A673 (cell line): ENCODE measurements at regions of chr5 and their contacts with region 1.

Region 1: DNA sequence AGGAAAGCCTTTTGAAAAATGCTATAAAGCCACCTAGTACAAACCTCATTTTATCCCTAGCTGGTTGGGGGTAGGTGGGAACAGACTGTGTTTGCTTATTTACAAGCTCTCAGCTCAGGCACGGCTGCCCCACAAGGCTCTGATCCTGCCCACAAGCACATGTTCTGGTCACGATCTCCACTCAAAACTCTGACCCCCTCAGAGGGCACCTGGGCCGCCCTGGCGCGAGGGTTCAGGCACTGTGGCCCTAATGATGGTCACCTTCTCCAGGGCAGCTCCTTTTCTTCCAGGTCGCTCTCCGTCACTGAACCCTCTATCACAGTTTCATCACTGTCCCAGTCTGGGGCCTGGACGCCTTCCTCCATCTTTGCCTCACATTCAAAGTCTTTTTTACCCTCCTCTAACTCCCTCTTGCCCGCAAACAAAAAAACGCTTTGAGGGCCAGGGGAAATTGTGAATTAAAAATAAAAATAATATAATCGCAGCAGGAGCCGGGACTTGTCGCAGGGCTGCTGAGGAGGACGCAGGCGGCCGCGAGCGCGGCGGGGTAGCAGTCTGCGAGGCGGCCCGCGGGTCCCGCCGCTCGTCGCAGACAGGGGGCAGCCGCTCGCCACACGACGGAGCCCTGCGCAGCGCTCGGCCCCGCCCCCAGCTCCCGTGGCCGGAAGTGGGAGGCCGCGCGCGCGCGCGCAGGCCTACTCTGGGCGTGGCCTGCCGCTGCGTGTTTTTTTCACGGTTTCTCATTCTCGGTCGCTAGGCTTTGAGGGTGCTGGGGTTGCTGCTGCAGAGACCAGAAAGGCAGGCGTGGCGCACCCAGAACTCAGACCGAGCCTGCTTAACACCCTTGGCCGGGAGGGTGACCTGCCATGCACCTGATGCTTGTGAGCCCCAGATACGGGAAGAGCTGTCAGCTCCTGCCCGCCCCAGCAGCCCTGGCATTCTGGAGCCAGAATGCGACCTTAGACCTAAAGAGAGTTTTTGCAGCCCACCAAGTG is at the start of gene ANKRD31:
- DNase-seq: peak; percentile 87
- H3K4me3 ChIP-seq: peak within 1 kb of the TSS; percentile 58
- H3K27ac ChIP-seq: no peak within 1 kb of the TSS
- H3K4me1 ChIP-seq: no peaks in the 10 kb centered on the region
- H3K27me3 ChIP-seq: no peaks in the 10 kb centered on the region
- CTCF ChIP-seq: peak; percentile 67
- total RNA-seq, gene ANKRD31: 0.04 and 0.15 TPM in 2 replicates

Region 2: GRCh38 chr5:75053304-75054133 is 183.1 kb before region 1 on chr5:
- CTCF ChIA-PET with region 1: interaction called, 3 read pairs
- POLR2A ChIA-PET with region 1: no interaction called
- intact Hi-C with region 1: loop called (anchors 5 kb)
- DNase-seq: peak; percentile 72
- H3K4me3 ChIP-seq: peak overlapping the region; percentile 72
- H3K27ac ChIP-seq: peak overlapping the region; percentile 73
- H3K4me1 ChIP-seq: peaks cover 14% of the 10 kb centered on the region
- H3K27me3 ChIP-seq: peaks cover 31% of the 10 kb centered on the region
- CTCF ChIP-seq: no peak

Region 3: GRCh38 chr5:75072066-75072465 is 164.6 kb before region 1 on chr5:
- CTCF ChIA-PET with region 1: no interaction called
- POLR2A ChIA-PET with region 1: no interaction called
- intact Hi-C with region 1: no loop called
- DNase-seq: no peak
- H3K4me3 ChIP-seq: no peak overlapping the region
- H3K27ac ChIP-seq: no peak overlapping the region
- H3K4me1 ChIP-seq: no peaks in the 10 kb centered on the region
- H3K27me3 ChIP-seq: no peaks in the 10 kb centered on the region
- CTCF ChIP-seq: no peak